ENCODE measurements at regions of chr14 and their contacts with region 1.

Region 1: GRCh38 chr14:59771577-59771976 is 99.0 kb downstream of the RTN1 start:
- DNase-seq: no peak
- ATAC-seq: no peak
- H3K4me3 ChIP-seq: no peak overlapping the region
- H3K27ac ChIP-seq: no peak overlapping the region
- H3K4me1 ChIP-seq: peaks cover 4% of the 10 kb centered on the region
- H3K27me3 ChIP-seq: no peaks in the 10 kb centered on the region
- CTCF ChIP-seq: no peak
- EP300 ChIP-seq: no peak
- POLR2A ChIP-seq: no peak
- RAD21 ChIP-seq: no peak

Region 2: DNA sequence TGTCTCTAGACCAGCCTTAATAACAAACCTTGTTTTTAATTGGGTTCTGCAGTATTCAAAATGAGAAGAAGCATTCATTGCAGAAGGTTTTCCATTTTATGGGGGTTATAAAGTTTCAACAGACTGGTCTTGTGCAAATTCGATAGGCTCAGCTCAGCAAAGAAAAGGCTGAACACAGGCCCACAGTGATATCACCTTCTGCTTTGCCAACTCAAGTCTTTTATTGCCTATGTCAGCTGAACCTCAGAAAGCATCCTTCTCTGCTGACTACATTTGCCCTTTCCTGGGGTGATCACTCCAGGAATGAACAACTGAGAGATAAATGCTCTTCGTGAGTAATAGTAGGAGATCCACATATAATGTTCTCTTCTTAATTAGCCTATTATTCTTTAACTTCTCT is 60.5 kb before region 1 on chr14:
- CTCF ChIA-PET with region 1: no interaction called
- POLR2A ChIA-PET with region 1: no interaction called
- in situ Hi-C with region 1: no loop called
- intact Hi-C with region 1: loop called (anchors 2 kb)
- DNase-seq: no peak
- ATAC-seq: no peak
- H3K4me3 ChIP-seq: no peak overlapping the region
- H3K27ac ChIP-seq: no peak overlapping the region
- H3K4me1 ChIP-seq: no peaks in the 10 kb centered on the region
- H3K27me3 ChIP-seq: no peaks in the 10 kb centered on the region; a peak in 1 of 5 replicates
- CTCF ChIP-seq: no peak
- EP300 ChIP-seq: no peak
- POLR2A ChIP-seq: no peak
- RAD21 ChIP-seq: no peak

Measured in HepG2 (cell line).